ENCODE measurements at regions of chr1 and their contacts with region 1.

Region 1: GRCh38 chr1:2133039-2133878 is 61.3 kb downstream of the FAAP20 start:
- DNase-seq: peak; percentile 99
- ATAC-seq: peak; percentile 91
- H3K4me3 Mint-ChIP-seq: peak overlapping the region; percentile 58
- H3K27ac Mint-ChIP-seq: peak overlapping the region; percentile 97
- H3K4me1 Mint-ChIP-seq: peaks cover 20% of the 10 kb centered on the region
- H3K27me3 Mint-ChIP-seq: no peaks in the 10 kb centered on the region; the same call in 1 of the 2 replicates
- CTCF ChIP-seq: no peak

Region 2: GRCh38 chr1:2108213-2108876 is 24.9 kb before region 1 on chr1:
- CTCF ChIA-PET with region 1: interaction called, 21 read pairs
- POLR2A ChIA-PET with region 1: interaction called, 5 read pairs
- DNase-seq: peak; percentile 81
- ATAC-seq: peak; percentile 83
- H3K4me3 Mint-ChIP-seq: no peak overlapping the region
- H3K27ac Mint-ChIP-seq: no peak overlapping the region
- H3K4me1 Mint-ChIP-seq: peaks cover 7% of the 10 kb centered on the region
- H3K27me3 Mint-ChIP-seq: no peaks in the 10 kb centered on the region
- CTCF ChIP-seq: peak; percentile 37; the same call in 1 of the 2 replicates

Region 3: GRCh38 chr1:2115681-2116341 is 17.4 kb before region 1 on chr1:
- CTCF ChIA-PET with region 1: interaction called, 18 read pairs
- POLR2A ChIA-PET with region 1: no interaction called
- DNase-seq: peak; percentile 72
- ATAC-seq: peak; percentile 94
- H3K4me3 Mint-ChIP-seq: peak overlapping the region; percentile 55
- H3K27ac Mint-ChIP-seq: peak overlapping the region; percentile 82
- H3K4me1 Mint-ChIP-seq: peaks cover 30% of the 10 kb centered on the region
- H3K27me3 Mint-ChIP-seq: no peaks in the 10 kb centered on the region
- CTCF ChIP-seq: no peak